Thyroid gland (tissue), 4 donors: ENCODE measurements at regions of chr9 and their contacts with region 1.

Region 1: DNA sequence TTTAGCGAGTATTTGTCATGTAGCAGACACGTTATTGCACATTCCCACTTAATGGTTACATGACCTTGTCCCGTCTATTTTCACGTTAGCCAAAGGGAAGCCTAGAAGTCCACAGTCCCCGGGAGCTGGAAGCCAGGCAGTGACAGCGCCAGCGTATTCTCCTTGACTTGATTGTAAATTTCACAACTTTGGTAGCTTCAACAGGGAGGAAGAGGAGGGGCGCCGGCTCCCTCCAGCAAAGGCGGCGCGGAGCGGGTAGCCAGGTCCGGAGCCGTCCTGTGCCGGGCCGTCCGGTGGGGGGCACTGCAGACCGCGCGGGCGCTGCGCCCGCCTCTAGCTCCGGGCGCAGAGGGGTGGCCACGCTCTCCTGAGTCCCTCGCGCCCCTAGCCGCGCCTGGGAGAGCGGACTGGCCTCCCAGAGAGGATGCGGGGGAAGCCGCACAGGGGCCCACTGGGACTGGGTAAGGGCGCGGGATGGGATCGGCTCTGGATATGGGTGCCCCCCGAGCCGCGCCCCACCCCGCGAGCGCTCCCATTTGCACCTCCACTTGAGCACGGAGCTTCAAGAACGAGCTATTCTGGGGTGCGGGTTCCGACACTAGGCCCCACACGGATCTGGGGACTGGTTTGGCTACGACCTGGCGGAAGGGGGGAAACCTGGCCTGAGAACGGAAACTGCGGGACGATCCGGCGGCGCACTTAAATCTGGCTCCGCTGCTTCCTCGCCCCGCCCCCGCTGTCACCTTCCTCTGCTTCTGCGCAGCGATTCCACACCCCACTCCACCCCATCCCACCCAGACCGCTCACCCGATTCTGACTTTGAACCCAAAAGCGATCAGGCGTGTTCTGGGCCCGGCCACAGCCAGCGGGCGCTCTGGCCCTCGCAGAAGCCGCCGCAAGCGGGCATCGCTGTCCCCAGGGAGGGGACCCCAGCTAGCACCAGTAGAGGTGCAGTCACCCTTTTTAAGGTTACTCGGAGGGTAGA is 23.8 kb downstream of the KLF4 start:
- DNase-seq: peak; percentile 62 to 67
- H3K4me3 ChIP-seq: peak overlapping the region; percentile 23 to 60 (median 40)
- H3K27ac ChIP-seq: no peak overlapping the region
- H3K4me1 ChIP-seq: peaks cover 0 to 15% of the 10 kb centered on the region in 2 donors
- H3K27me3 ChIP-seq: no peaks in the 10 kb centered on the region
- CTCF ChIP-seq: peak; percentile 50 to 94 (median 76)
- POLR2A ChIP-seq: no peak

Region 2: DNA sequence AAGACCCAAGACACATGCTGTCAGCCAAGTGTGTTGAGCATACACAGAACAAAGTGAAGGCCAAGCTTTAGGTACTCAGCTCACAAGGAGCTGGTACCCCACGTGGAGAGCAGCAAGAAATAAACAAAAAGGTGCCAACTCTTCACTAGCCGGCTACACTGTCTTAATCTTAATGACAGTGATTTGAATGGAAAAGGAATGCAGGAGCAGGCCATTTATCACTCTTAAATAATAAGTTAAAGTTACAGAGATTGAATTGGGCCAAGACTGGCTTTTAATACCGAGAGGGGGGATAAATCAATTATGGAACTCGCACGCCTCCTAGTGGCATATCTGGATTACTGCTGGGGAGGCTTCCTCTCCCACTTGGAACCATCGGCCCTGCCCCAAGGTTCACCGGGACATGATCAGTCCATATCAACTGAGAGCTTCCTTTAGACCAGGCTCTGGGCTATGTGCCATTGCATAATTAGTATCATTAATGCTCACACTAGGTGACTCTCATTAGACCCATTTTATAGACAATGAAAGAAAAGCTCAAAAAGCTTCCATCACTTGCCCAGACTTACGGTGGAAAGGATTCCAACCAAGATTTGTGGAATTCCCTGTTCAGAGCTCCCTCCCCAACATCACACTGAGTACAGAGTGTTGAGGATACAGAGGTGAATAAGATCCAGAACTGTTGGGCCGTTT is 1296.0 kb after region 1 on chr9:
- intact Hi-C with region 1: loop called (anchors 10 kb)
- DNase-seq: peak; percentile 64 to 69
- H3K4me3 ChIP-seq: no peak overlapping the region
- H3K27ac ChIP-seq: no peak overlapping the region
- H3K4me1 ChIP-seq: peaks cover 0 to 6% of the 10 kb centered on the region in 2 donors
- H3K27me3 ChIP-seq: no peaks in the 10 kb centered on the region
- CTCF ChIP-seq: peak; percentile 61 to 92 (median 86)
- POLR2A ChIP-seq: no peak